BJ (cell line): ENCODE measurements at regions of chr3 and their contacts with region 1.

Region 1: GRCh38 chr3:23075496-23075895 is 127.6 kb upstream of the UBE2E2 start:
- DNase-seq: peak; percentile 53
- H3K4me3 ChIP-seq: no peak overlapping the region
- H3K27me3 ChIP-seq: no peaks in the 10 kb centered on the region
- CTCF ChIP-seq: no peak

Region 2: DNA sequence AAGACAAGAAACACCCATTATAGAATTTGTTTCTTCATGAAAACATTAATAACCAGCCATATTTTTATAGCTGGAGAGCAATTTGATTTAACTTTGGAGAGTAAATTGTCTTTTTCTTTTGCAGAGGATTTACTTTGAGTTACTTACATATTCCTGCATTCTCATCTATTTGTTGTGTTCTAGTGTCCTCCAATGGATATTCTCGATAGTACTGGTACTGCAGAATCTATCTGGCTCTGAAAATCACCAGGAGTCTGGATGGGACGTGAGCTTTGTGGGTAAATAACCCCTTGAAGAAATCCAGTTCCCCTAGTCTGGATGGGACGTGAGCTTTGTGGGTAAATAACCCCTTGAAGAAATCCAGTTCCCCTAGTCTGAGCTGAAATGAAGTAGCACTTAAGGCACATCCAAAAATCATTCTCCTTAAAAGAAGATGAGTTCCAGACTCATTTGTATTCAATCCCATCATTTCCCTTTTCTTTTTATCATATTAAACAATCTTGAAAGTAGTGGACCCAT is 166.4 kb before region 1 on chr3:
- CTCF ChIA-PET with region 1: no interaction called
- POLR2A ChIA-PET with region 1: no interaction called
- DNase-seq: no peak
- H3K4me3 ChIP-seq: no peak overlapping the region
- H3K27me3 ChIP-seq: no peaks in the 10 kb centered on the region
- CTCF ChIP-seq: no peak

Region 3: DNA sequence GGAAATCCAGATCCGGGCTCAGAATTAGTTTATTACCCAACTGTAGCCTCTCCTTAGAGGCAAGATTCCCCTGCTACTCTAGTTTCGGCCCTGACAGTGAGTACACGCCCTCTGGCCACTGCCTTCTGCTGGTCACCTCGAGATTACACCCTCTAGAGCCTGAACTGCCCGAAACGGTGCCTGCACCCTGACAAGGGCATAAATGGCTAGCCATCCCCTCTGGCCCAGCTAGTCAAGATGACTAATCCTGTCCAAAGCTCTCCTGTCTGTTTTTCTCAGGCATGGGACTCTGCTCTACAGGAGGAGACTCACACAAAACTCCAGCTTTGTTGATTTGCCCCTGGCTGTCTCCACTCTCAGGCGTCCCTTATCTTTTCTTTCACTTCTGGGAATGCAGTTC is 22.9 kb before region 1 on chr3:
- CTCF ChIA-PET with region 1: no interaction called
- POLR2A ChIA-PET with region 1: no interaction called
- DNase-seq: no peak
- H3K4me3 ChIP-seq: no peak overlapping the region
- H3K27me3 ChIP-seq: peaks cover 2% of the 10 kb centered on the region; the same call in 1 of the 2 replicates
- CTCF ChIP-seq: no peak

Region 4: GRCh38 chr3:23062587-23063302 is 12.8 kb before region 1 on chr3:
- CTCF ChIA-PET with region 1: no interaction called
- POLR2A ChIA-PET with region 1: no interaction called
- DNase-seq: no peak
- H3K4me3 ChIP-seq: no peak overlapping the region
- H3K27me3 ChIP-seq: peaks cover 2% of the 10 kb centered on the region; the same call in 1 of the 2 replicates
- CTCF ChIP-seq: no peak

Region 5: GRCh38 chr3:23256741-23257435 is 181.4 kb after region 1 on chr3:
- CTCF ChIA-PET with region 1: no interaction called
- POLR2A ChIA-PET with region 1: interaction called, 14 read pairs
- DNase-seq: no peak
- H3K4me3 ChIP-seq: no peak overlapping the region
- H3K27me3 ChIP-seq: no peaks in the 10 kb centered on the region
- CTCF ChIP-seq: no peak